Activated T-helper 2 cell treated with anti-CD3 and anti-CD28 coated beads, Interferon-gamma antibody, Interleukin-2, Interleukin-4, amounts not matched to agents 10 μg/mL and 5 μg/mL and 100 μg/mL, durations not matched to agents 14 hours and 24 hours and 36 hours (primary cell): ENCODE measurements at regions of chr2 and their contacts with region 1.

Region 1: DNA sequence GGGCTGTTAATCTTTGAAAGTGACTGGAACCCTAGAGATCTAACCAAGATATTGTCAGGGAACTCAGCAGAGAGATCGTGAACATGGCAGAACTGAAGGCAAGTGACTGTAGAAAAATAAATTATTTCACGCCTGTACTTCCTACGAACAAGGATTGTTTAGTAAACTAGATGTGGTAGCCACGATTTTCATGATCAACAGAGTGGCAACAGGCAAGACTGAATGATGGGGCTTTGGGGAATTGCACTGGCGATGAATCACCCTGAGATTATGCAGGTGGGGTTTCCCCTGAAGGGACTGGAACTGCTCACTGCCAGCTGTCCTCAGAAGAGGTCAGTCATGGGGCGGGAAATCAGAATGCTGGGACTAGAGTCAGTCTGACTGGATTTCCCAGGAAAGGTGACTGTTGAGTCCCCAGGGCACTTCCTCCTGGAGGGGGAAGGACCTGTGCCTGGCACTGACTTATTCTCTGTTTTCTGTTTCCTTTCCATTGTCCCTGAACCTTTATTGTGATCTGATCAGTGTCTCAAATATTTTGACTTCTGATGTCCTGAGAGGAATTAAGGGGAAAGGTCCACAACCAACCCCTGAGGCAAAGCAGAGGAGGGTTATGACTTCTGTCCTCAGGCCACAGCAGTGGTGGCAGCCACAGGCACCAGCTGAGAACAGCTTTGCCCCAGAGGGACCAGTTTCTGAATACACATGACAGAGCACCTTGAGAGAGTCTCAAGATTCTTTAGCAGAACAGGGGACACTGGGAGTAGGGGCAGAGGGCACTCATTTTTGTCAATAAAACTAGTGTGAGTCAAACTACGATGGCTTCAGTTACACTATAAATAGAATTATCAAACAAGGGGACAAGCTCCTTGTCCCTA is 70.0 kb downstream of the NAB1 start:
- DNase-seq: no peak
- H3K4me3 Mint-ChIP-seq: peak overlapping the region; percentile 28
- H3K27ac Mint-ChIP-seq: peak overlapping the region; percentile 92
- H3K4me1 Mint-ChIP-seq: peaks cover 75% of the 10 kb centered on the region
- H3K27me3 Mint-ChIP-seq: no peaks in the 10 kb centered on the region

Region 2: GRCh38 chr2:190319555-190320498 is 399.1 kb before region 1 on chr2 and contains the start of gene HIBCH:
- intact Hi-C with region 1: loop called (anchors 5 kb)
- DNase-seq: peak; percentile 82
- H3K4me3 Mint-ChIP-seq: peak within 1 kb of the TSS; percentile 94
- H3K27ac Mint-ChIP-seq: peak within 1 kb of the TSS; percentile 96
- H3K4me1 Mint-ChIP-seq: peaks cover 51% of the 10 kb centered on the region
- H3K27me3 Mint-ChIP-seq: no peaks in the 10 kb centered on the region
- total RNA-seq, gene HIBCH: 24.5 and 26.0 TPM in 2 replicates

Region 3: GRCh38 chr2:190648289-190649034 is 70.4 kb before region 1 on chr2:
- intact Hi-C with region 1: loop called (anchors 1 kb)
- DNase-seq: peak; percentile 74
- H3K4me3 Mint-ChIP-seq: peak overlapping the region; percentile 73
- H3K27ac Mint-ChIP-seq: peak overlapping the region; percentile 74
- H3K4me1 Mint-ChIP-seq: peaks cover 40% of the 10 kb centered on the region
- H3K27me3 Mint-ChIP-seq: no peaks in the 10 kb centered on the region

Region 4: GRCh38 chr2:190707726-190708125 is 11.2 kb before region 1 on chr2:
- intact Hi-C with region 1: loop called (anchors 1 kb)
- DNase-seq: no peak
- H3K4me3 Mint-ChIP-seq: no peak overlapping the region
- H3K27ac Mint-ChIP-seq: no peak overlapping the region
- H3K4me1 Mint-ChIP-seq: peaks cover 27% of the 10 kb centered on the region
- H3K27me3 Mint-ChIP-seq: no peaks in the 10 kb centered on the region

Region 5: DNA sequence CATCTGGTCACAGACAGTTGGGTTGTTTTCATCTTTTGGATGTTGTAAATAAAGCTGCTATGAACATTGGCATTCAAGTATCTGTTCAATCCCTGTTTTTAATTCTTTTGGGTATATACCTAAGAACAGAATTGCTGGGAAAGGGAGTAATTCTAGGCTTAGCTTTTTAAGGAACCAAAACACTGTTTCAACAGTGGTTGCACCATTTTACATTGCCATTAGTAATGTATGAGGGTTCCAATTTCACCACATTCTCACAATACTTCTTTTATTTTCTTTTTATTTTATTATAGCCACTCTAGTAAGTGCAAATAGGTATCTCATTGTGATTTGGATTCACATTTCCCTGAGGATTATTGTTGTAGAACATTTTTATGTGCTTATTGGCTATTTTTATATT is 52.8 kb after region 1 on chr2:
- intact Hi-C with region 1: no loop called
- DNase-seq: no peak
- H3K4me3 Mint-ChIP-seq: no peak overlapping the region
- H3K27ac Mint-ChIP-seq: no peak overlapping the region
- H3K4me1 Mint-ChIP-seq: peaks cover 14% of the 10 kb centered on the region
- H3K27me3 Mint-ChIP-seq: no peaks in the 10 kb centered on the region

Region 6: DNA sequence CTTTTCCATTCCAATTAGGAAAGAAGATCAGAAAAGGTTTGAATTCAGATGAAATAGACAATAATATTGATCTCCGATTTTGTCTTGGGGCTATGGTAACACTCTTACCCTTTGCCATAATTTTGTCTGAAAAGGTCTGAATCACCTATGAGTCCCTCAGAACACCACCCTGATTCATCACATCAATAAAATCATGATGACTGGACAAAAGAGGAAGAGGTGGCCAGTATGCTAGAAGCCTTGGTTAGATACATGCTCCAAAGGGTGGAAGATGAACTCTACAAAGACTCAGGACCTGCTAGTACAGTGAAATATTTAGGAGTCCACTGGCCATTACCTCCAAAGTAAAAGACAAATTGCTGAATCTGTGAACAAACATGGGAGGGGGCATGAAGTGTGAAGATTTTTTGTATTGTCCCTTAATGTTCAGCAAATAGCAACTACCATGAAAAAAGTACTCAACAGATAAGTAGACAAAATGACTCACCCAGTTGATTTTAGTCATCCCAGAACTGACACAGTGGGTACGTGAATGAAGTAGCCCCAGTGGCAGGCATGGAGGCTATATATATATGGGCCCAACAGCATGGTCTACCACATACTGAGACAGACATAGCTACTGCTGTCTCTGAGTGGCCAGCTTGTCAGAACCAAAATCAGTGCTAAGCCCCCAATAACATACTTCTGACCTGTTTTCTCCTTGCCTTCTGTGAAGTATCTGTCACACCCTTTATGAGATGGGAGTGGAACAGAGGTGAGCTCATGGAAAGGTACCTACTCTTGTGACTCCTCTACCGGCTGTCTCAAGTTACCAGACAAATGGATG is 125.2 kb after region 1 on chr2:
- intact Hi-C with region 1: loop called (anchors 1 kb)
- DNase-seq: peak; percentile 17
- H3K4me3 Mint-ChIP-seq: no peak overlapping the region
- H3K27ac Mint-ChIP-seq: peak overlapping the region; percentile 94
- H3K4me1 Mint-ChIP-seq: peaks cover 44% of the 10 kb centered on the region
- H3K27me3 Mint-ChIP-seq: no peaks in the 10 kb centered on the region

Region 7: GRCh38 chr2:191013932-191014652 is 295.2 kb after region 1 on chr2 and contains the start of gene STAT1:
- intact Hi-C with region 1: loop called (anchors 2 kb)
- DNase-seq: peak; percentile 96
- H3K4me3 Mint-ChIP-seq: no peak within 1 kb of the TSS
- H3K27ac Mint-ChIP-seq: no peak within 1 kb of the TSS
- H3K4me1 Mint-ChIP-seq: peaks cover 40% of the 10 kb centered on the region
- H3K27me3 Mint-ChIP-seq: no peaks in the 10 kb centered on the region
- total RNA-seq, gene STAT1: 135 and 139 TPM in 2 replicates